H1 (cell line): ENCODE measurements at regions of chr6 and their contacts with region 1.

Region 1: DNA sequence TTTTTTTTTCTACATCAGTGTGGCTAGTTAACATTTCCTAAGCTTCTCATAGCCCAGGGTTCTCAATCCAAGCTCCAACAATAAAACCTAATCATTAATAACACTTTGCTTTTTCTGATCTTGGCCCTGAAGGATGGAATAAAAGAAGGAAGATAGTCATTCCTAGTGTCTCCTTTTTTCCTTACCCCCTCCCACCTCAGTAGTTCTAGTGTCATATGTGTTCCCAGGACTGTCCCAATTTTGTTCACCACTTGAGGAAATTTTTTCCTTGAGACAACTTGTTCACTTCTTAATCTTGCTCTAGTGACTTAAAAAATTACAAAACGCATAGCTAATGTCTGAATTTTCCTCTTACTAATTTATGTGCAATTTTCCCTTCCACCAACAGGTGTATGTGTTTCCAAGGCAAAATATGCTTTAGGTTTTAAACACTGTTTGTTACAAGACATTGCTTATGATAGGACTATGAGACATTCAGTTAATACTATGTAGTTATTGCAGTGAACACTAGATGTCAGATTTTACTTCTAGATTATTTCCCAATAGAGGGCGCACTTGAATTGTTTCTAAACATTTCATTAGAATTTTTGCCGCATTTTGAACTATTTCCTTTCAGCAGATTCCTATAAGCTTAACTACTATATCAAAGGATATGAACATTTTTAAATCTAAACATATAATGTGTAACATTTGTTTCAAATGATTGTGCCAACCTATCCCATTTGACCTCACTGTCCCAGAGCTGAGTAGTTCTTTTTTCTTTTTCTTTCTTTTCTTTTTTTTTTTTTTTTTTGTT is 18.5 kb upstream of the C6orf141 start:
- DNase-seq: no peak
- H3K4me3 ChIP-seq: no peak overlapping the region
- H3K27ac ChIP-seq: no peak overlapping the region
- H3K4me1 ChIP-seq: peaks cover 0 to 5% (median 2%) of the 10 kb centered on the region in 4 experiments; a peak in 1 of 7 replicates
- H3K27me3 ChIP-seq: no peaks in the 10 kb centered on the region
- CTCF ChIP-seq: peak in 2 of 3 experiments; percentile 65 to 94; a peak in 2 of 4 replicates
- EP300 ChIP-seq: no peak
- POLR2A ChIP-seq: no peak
- RAD21 ChIP-seq: peak in 1 of 2 experiments; percentile 71

Region 2: DNA sequence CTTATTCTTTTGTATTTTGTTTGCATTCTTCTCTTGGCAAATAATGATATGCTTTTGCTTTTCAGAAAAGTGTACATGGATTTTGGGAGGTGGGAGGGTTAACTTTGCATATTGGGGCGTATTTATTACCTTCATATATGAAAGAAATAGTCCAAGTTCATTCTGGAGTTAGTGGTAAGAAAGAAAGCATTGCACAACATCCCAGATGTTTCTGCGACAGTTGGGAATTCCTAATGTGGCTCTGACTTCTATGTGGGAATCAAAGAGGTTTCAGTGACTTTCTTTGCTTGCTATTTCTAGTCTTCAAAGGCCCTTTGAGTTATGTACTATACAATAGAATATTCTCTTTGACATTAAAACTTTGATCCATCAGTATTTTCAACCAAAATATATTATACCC is 147.1 kb before region 1 on chr6:
- CTCF ChIA-PET with region 1: no interaction called
- POLR2A ChIA-PET with region 1: no interaction called
- DNase-seq: no peak
- H3K4me3 ChIP-seq: no peak overlapping the region
- H3K27ac ChIP-seq: no peak overlapping the region
- H3K4me1 ChIP-seq: no peaks in the 10 kb centered on the region
- H3K27me3 ChIP-seq: no peaks in the 10 kb centered on the region
- CTCF ChIP-seq: no peak
- EP300 ChIP-seq: no peak
- POLR2A ChIP-seq: no peak
- RAD21 ChIP-seq: no peak

Region 3: GRCh38 chr6:49514571-49515484 is 17.1 kb before region 1 on chr6:
- CTCF ChIA-PET with region 1: interaction called, 14 read pairs
- POLR2A ChIA-PET with region 1: no interaction called
- DNase-seq: no peak
- H3K4me3 ChIP-seq: no peak overlapping the region
- H3K27ac ChIP-seq: no peak overlapping the region
- H3K4me1 ChIP-seq: peaks cover 0 to 2% (median under 1%) of the 10 kb centered on the region in 4 experiments; a peak in 2 of 7 replicates
- H3K27me3 ChIP-seq: no peaks in the 10 kb centered on the region
- CTCF ChIP-seq: no peak
- EP300 ChIP-seq: no peak
- POLR2A ChIP-seq: no peak
- RAD21 ChIP-seq: no peak

Region 4: DNA sequence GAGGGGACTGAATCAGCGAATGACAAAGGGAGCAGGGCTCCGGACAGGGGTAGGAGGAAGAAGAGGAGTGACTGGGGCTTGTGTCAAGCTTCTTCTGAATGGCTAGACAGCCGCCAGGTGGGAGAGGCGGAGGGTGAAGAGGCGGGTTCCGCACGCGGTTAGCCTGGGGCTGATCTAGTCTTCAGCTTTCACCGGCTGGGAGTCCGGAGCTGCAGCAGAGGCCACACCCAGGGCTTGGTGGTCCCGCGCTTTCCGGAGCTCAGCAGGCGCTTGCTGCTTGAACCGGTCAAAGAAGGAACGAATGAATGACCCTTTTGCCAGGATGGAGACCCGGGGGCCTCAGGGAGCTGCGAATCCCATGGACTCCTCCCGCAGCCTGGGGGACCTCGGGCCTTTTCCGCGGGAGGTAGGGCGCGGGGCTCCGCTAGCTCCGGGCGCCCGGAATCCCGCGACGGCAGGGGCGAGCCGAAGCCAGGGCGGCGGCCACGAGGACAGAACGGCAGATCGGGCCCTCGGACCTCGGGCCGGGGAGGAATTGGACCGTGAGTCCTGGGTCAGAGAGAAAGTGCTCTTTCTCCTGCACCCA is 18.6 kb after region 1 on chr6 and contains the start of gene C6orf141:
- CTCF ChIA-PET with region 1: interaction called, 41 read pairs
- POLR2A ChIA-PET with region 1: interaction called, 3 read pairs
- DNase-seq: peak; percentile 74 to 81
- H3K4me3 ChIP-seq: peak within 1 kb of the TSS; percentile 69 to 97 (median 79)
- H3K27ac ChIP-seq: peak within 1 kb of the TSS; percentile 76
- H3K4me1 ChIP-seq: peaks cover 4 to 25% (median 9%) of the 10 kb centered on the region in 4 experiments
- H3K27me3 ChIP-seq: peaks cover 0 to 4% (median 0%) of the 10 kb centered on the region in 4 experiments; a peak in 3 of 7 replicates
- CTCF ChIP-seq: no peak
- EP300 ChIP-seq: no peak
- POLR2A ChIP-seq: peak in 1 of 2 experiments; percentile 68; a peak in 2 of 3 replicates
- RAD21 ChIP-seq: no peak
- total RNA-seq, gene C6orf141: 16.1 and 17.6 TPM in 2 replicates

Region 5: GRCh38 chr6:49570474-49571079 is 38.6 kb after region 1 on chr6:
- CTCF ChIA-PET with region 1: interaction called, 10 read pairs
- POLR2A ChIA-PET with region 1: no interaction called
- DNase-seq: no peak
- H3K4me3 ChIP-seq: no peak overlapping the region
- H3K27ac ChIP-seq: no peak overlapping the region
- H3K4me1 ChIP-seq: no peaks in the 10 kb centered on the region
- H3K27me3 ChIP-seq: no peaks in the 10 kb centered on the region; a peak in 1 of 7 replicates
- CTCF ChIP-seq: no peak
- EP300 ChIP-seq: no peak
- POLR2A ChIP-seq: no peak
- RAD21 ChIP-seq: no peak

Region 6: DNA sequence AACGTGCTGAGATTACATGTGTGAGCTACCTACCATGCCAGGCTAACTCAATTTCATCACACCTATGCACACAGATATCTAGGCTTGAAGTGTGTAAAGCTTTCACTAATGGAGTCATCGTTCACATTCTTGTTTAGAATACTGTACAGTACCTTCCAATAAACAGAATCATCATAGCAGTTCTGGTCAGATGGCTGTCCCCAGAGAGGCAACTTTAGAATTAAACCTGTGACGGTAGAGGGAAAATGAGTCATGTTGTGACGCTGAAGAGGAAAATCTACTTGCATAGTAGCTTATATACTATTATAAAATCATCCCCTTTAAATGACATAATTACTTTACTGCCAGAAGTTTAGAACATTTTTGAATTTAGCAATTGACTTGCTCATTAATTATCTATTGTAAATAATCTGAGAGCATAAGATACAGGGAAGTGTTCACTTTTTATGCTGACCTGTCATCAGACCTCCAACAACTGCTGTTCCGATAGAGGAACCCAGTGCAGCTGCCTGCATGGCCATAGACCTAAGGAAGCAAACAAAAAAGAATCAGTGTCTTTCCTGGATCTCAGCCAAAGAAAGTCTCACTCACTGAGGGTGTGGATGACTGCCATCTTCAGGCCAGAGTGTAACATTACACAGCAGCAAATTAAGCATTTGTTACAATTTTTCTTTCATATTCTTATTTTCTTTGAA is 74.9 kb after region 1 on chr6:
- CTCF ChIA-PET with region 1: interaction called, 43 read pairs
- POLR2A ChIA-PET with region 1: no interaction called
- DNase-seq: no peak
- H3K4me3 ChIP-seq: no peak overlapping the region
- H3K27ac ChIP-seq: no peak overlapping the region
- H3K4me1 ChIP-seq: peaks cover 0 to 2% (median 0%) of the 10 kb centered on the region in 4 experiments; a peak in 3 of 7 replicates
- H3K27me3 ChIP-seq: no peaks in the 10 kb centered on the region
- CTCF ChIP-seq: peak in 2 of 3 experiments; percentile 77; a peak in 3 of 4 replicates
- EP300 ChIP-seq: no peak
- POLR2A ChIP-seq: no peak
- RAD21 ChIP-seq: peak; percentile 83 to 84

Region 7: DNA sequence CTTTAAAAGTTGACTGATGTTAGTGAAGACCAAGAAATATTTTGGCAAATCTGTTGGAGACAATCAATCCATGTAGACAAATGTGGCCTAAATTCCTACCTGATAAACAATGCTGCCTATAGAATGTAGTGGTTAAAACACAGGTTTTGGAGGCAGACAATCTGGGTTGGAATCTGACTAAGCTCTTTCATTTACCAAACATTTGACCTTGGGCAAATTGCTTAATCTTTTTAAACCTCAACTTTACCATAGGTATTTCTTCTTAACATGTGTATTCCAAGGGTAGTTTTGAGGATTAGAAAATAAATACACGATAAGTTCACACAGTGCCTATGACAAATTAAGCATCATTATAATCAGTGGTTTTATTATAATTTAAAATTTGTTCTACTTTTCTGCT is 93.2 kb after region 1 on chr6:
- CTCF ChIA-PET with region 1: interaction called, 14 read pairs
- POLR2A ChIA-PET with region 1: no interaction called
- DNase-seq: no peak
- H3K4me3 ChIP-seq: no peak overlapping the region
- H3K27ac ChIP-seq: no peak overlapping the region
- H3K4me1 ChIP-seq: no peaks in the 10 kb centered on the region
- H3K27me3 ChIP-seq: no peaks in the 10 kb centered on the region
- CTCF ChIP-seq: no peak
- EP300 ChIP-seq: no peak
- POLR2A ChIP-seq: no peak
- RAD21 ChIP-seq: no peak

Region 8: DNA sequence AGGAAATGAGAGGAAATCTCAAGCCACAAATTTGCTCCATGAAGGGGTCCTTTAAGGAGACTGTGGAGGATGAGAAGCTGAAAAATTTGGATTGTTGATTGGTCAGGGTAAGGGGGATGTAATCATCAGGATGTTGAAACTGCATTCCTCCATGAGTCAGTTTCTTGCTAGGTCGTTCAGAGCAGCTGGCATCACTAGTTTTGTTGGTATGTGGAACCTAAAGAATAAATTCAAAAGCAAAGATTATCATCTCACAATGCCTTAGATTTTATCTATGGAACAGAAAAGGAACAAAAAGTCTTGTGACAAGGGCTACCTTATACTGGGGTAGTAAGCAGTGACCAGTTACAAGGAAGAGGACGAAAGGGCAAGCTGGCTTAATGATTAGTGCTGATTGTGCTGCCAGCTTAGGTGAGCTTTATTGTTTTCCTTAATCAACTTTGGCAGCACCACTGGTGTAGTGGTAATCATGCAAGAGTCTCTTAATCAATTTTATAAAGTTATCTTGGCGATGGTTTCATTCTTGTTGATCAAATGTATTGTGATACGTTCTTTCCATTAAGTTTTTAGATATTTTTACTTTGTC is 144.8 kb after region 1 on chr6:
- CTCF ChIA-PET with region 1: no interaction called
- POLR2A ChIA-PET with region 1: no interaction called
- DNase-seq: no peak
- H3K4me3 ChIP-seq: no peak overlapping the region
- H3K27ac ChIP-seq: no peak overlapping the region
- H3K4me1 ChIP-seq: no peaks in the 10 kb centered on the region
- H3K27me3 ChIP-seq: peaks cover 0 to 2% (median 0%) of the 10 kb centered on the region in 4 experiments; a peak in 1 of 7 replicates
- CTCF ChIP-seq: no peak
- EP300 ChIP-seq: no peak
- POLR2A ChIP-seq: no peak
- RAD21 ChIP-seq: no peak

Region 9: DNA sequence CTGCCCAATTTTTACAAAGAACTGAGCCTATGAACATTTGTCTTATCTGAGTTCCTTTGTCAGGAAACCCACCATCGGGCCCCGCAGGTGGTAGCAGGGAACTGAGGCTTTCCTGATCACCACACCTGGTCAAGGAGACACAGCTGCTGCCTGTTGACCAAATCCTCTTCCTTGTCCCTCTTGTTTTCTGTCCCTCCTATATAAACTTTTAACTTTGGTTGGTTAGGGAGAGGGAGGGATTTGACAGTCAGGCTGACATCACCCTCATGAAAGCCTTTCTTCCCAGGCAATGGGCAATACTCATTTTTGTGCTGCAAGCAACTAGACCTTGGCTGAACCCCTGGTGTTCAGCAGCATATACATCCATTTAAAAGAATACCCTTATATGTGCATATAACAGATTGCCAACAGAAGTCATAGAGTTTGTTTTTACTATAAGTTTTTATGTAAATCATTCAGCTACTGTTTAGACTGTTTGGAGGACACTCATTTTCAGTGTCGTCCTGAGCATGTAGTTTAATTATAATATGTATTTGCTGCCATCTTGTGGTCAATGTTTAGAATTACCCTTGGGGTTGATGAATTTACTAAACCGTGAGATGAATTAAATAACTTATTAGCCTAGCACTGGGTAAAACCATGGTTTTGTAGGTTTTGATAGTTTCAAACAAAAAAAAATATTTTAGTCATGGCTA is 317.4 kb after region 1 on chr6:
- CTCF ChIA-PET with region 1: interaction called, 28 read pairs
- POLR2A ChIA-PET with region 1: no interaction called
- DNase-seq: no peak
- H3K4me3 ChIP-seq: no peak overlapping the region
- H3K27ac ChIP-seq: no peak overlapping the region
- H3K4me1 ChIP-seq: no peaks in the 10 kb centered on the region
- H3K27me3 ChIP-seq: no peaks in the 10 kb centered on the region
- CTCF ChIP-seq: peak in 2 of 3 experiments; percentile 28 to 32; a peak in 2 of 4 replicates
- EP300 ChIP-seq: no peak
- POLR2A ChIP-seq: no peak
- RAD21 ChIP-seq: peak; percentile 73 to 78